ENCODE measurements at regions of chr7 and their contacts with region 1.

Region 1: DNA sequence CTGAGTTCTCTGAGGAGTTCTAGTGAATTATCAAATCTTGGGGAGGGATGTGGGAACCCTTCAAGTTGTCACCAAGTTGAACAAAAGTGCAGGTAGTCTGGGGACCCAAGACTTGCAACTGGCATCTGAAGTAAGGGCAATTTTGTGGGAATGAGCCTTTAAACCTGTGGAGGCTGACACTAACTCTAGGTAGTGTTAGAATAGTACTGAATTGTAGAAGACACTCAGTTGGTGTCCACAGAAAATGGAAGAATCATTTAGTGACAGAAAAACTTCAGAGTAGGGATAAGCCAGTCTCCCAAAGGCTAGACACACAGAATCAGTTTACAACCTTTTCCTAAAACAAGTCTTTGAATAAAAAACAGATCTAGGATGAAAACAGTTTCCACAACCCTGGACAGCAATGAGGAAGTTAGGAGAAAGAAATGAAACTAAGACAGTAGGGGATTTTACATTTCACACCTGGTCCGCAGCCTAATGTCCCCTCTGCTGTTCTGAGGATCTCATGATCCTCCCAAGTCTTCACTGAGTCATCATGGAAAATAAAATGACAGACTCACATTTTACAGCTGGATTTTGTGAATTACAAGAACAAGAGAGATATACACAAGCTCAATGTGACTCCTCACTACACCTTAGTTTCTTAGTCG is 23.0 kb upstream of the ING3 start:
- DNase-seq: no peak
- CTCF ChIP-seq: no peak

Region 2: GRCh38 chr7:120819863-120820262 is 107.7 kb before region 1 on chr7:
- in situ Hi-C with region 1: loop called (anchors 10 kb)
- DNase-seq: no peak
- CTCF ChIP-seq: peak; percentile 29